ENCODE measurements at regions of chr17 and their contacts with region 1.

Region 1: DNA sequence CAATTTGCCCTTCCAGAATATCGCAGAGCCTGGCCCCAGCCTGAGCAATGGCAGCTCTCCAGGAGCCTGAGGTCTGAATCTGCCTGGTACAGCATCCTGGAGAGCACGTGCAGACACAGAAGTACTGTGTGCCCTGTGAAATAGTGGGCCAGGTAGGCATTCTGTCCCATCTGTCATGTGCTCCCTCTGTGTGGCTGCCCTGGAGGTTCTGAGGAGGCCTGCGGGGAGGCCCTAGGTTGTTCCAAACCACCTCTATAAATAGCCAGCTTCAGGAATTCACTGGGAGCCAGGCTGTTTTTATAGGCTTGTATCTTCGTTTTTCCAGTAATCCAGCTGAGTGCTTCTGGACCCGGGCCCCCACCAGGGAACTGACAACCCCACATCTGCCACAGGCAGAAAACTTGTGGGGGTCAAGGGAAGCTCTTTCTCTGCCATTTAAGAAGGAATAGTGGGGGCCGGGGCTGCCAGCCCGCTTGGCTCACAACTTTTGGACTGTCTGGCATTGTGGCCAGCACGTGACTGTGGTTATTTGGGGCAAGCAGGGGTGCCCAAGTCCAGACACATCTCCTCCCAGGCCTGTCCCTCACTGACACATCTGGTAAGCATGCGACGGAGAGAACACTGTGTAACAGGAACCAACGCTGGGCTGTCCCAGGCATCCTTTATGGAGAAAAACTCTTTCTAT is 356.3 kb upstream of the TNRC6C start:
- DNase-seq: peak; percentile 92
- H3K4me3 ChIP-seq: no peak overlapping the region
- H3K27ac ChIP-seq: peak overlapping the region; percentile 90 to 95 (median 90)
- H3K4me1 ChIP-seq: peaks cover 0 to 52% (median 44%) of the 10 kb centered on the region in 4 donors
- H3K27me3 ChIP-seq: no peaks in the 10 kb centered on the region
- CTCF ChIP-seq: peak in 1 of 4 experiments; percentile 14
- EP300 ChIP-seq: peak in 3 of 4 donors; percentile 11 to 86 (median 84)
- POLR2A ChIP-seq: no peak

Region 2: DNA sequence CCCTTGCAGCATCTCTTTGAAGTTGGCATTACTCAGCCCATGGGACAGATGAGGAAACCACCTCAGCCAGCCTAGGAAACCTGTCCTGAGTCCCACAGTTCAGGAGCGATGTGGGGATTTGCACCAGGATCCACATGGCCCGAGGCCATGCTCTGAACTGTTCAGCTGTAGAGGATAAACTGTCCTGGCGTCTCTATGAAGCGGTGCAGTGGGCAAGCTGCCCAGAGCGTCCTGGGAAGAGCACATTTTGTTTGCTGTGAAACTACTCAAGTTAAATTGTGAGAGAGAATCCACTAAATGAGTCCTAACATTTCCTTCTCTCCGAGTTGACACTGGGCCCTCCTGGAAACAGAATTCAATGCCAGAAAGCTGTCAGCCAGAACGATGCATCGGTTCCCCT is 79.7 kb after region 1 on chr17:
- intact Hi-C with region 1: loop called (anchors 5 kb)
- DNase-seq: peak; percentile 93
- H3K4me3 ChIP-seq: no peak overlapping the region
- H3K27ac ChIP-seq: peak overlapping the region; percentile 59 to 71 (median 66)
- H3K4me1 ChIP-seq: peaks cover 0 to 17% (median 6%) of the 10 kb centered on the region in 4 donors
- H3K27me3 ChIP-seq: no peaks in the 10 kb centered on the region
- CTCF ChIP-seq: peak; percentile 13 to 48 (median 28)
- EP300 ChIP-seq: no peak
- POLR2A ChIP-seq: no peak

Measured in sigmoid colon (tissue), 7 donors.